Activated CD4-positive, alpha-beta T cell treated with anti-CD3 and anti-CD28 coated beads for 36 hours (primary cell): ENCODE measurements at regions of chr3 and their contacts with region 1.

Region 1: DNA sequence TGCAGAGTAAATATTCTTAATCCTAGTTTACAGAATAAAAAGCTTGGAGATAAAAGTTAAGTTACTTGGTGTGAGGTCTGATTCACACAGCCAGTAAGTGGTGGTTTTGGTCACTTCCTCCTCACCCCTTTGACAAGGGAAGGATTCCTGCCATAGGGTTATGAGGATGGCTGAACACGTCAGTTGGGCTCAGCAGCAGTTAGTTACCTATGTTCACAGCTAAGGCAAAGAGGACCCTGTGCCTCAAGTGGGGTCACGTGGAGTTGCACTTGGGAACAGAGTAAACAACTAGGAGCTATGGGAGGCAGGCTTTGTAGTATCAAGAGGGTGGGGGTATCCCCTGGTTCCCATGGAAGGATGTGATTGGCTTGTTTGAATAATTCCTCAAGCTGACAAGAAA is 232.2 kb downstream of the UBE2E2 start:
- DNase-seq: no peak
- ATAC-seq: no peak
- H3K4me3 Mint-ChIP-seq: no peak overlapping the region
- H3K27ac Mint-ChIP-seq: no peak overlapping the region
- H3K4me1 Mint-ChIP-seq: peaks cover 28% of the 10 kb centered on the region
- H3K27me3 Mint-ChIP-seq: peaks cover 3% of the 10 kb centered on the region

Region 2: DNA sequence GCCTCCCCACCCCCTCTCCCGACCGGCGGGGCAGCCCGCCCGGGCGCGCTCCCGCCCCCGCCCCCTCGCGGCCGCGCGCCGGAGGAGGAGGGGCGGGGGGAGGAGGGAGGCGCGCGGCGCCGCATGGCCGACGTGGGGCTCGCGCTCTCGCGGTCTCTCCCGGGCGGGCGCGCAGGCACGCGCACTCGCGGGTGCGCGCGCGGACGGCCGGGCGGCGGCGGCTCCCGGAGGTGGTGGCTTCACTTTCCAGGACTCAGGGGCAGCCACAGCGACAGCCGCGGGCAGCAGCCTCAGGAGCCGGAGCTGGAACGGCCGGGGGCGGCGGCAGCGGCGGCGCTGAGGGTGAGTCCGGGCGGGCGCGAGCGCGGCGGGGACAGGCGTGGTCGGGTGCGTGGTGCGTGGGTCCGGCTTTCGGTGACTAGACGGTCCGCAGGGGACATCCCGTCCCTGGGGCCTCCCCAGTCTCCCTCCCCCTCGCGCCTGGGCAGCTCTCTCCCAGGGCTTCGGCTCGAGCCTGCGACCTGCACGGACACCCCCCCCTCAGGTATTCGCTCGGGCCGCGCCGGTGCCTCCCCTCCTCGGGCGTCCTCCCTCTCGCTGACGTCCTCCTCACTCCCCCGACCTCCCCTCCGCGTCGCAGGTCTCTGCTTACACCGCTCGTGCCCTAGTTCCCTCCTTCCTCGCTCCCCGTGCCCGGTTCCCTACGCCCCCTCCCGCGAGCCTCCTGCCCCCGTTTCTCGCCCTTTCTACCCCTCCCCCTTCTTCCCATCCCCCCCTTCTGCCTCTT is 232.2 kb before region 1 on chr3 and contains the start of gene UBE2E2:
- CTCF ChIA-PET with region 1: no interaction called
- POLR2A ChIA-PET with region 1: no interaction called
- intact Hi-C with region 1: loop called in 1 of 2 experiments (anchors 5 kb)
- DNase-seq: peak; percentile 78
- ATAC-seq: peak; percentile 62
- H3K4me3 Mint-ChIP-seq: peak within 1 kb of the TSS; percentile 83
- H3K27ac Mint-ChIP-seq: peak within 1 kb of the TSS; percentile 76
- H3K4me1 Mint-ChIP-seq: peaks cover 23% of the 10 kb centered on the region
- H3K27me3 Mint-ChIP-seq: peaks cover 11% of the 10 kb centered on the region
- total RNA-seq, gene UBE2E2: 13.5 to 18.2 TPM

Region 3: GRCh38 chr3:23540600-23540999 is 105.3 kb after region 1 on chr3:
- CTCF ChIA-PET with region 1: no interaction called
- POLR2A ChIA-PET with region 1: no interaction called
- intact Hi-C with region 1: no loop called
- DNase-seq: no peak
- ATAC-seq: no peak
- H3K4me3 Mint-ChIP-seq: no peak overlapping the region
- H3K27ac Mint-ChIP-seq: no peak overlapping the region
- H3K4me1 Mint-ChIP-seq: no peaks in the 10 kb centered on the region
- H3K27me3 Mint-ChIP-seq: no peaks in the 10 kb centered on the region